AG04449 (cell line): ENCODE measurements at regions of chr2 and their contacts with region 1.

Region 1: DNA sequence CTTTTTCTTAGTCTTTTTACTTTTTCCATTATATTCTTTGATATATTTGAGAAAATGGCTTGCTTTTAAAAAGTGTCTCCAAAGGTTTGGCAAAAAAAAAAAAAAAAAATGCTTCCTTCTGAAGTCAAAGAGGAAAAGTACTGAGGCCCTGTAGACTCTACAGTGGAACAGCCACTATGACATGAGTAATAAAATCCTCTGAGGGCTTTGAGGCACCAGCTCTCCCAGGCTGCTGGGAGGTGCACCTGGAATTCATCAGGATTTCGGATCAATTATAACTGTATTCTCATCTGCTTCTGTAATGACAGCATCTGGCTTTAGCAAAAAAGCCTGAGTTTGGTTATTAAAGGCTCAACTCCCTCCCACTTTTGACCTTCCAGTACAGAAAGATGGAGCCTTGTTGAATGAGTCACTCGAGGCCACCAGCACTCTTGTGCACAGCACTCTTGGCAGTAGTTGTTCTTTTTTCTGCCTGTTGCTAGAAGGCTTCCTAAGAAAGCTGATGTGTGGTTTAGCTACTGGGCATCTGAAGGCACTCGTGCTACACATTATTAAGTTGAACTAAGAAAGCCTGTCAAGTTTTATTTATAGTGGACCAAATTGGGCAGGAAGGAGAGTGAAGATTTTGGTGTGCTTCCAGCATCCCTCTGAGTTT is 131.3 kb downstream of the PRPF40A start:
- DNase-seq: peak; percentile 72
- H3K4me3 ChIP-seq: no peak overlapping the region
- CTCF ChIP-seq: no peak

Region 2: DNA sequence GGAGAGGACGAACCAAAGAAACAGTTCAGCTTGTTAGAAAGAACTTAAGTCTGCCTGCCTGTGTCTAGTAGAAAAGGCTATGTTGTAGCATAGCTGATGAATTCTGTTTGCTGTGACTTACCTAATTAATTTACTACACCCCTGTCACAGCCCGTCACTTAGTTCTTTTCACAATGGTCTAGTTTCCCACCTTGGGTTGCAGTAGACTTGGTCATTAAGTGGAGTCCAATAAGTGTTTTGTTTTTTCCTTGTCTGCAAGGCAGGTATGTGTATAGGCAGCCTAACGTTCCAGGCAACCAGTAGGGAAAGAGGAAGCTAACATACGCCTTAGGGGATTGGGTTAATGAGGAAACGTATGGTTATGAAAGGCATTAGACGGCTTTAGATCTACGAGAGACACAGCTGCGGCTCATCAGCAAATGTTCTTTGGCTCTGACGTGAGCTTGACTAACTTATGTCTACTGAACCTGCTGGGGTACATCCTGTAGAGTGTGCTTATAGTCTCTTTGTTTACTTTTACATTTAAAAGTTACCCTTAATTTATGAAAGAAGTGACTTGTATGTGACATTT is 48.8 kb before region 1 on chr2:
- CTCF ChIA-PET with region 1: no interaction called
- POLR2A ChIA-PET with region 1: no interaction called
- DNase-seq: no peak
- H3K4me3 ChIP-seq: no peak overlapping the region
- CTCF ChIP-seq: no peak

Region 3: GRCh38 chr2:152573168-152573567 is 12.8 kb before region 1 on chr2:
- CTCF ChIA-PET with region 1: interaction called, 4 read pairs
- POLR2A ChIA-PET with region 1: interaction called, 10 read pairs
- DNase-seq: peak; percentile 74
- H3K4me3 ChIP-seq: no peak overlapping the region
- CTCF ChIP-seq: no peak